ENCODE measurements at regions of chr16 and their contacts with region 1.

Region 1: GRCh38 chr16:15925631-15926030 is 23.8 kb upstream of the ABCC1 start:
- DNase-seq: no peak
- H3K4me3 ChIP-seq: no peak overlapping the region
- H3K27ac ChIP-seq: no peak overlapping the region
- H3K4me1 ChIP-seq: no peaks in the 10 kb centered on the region
- H3K27me3 ChIP-seq: no peaks in the 10 kb centered on the region
- CTCF ChIP-seq: no peak

Region 2: DNA sequence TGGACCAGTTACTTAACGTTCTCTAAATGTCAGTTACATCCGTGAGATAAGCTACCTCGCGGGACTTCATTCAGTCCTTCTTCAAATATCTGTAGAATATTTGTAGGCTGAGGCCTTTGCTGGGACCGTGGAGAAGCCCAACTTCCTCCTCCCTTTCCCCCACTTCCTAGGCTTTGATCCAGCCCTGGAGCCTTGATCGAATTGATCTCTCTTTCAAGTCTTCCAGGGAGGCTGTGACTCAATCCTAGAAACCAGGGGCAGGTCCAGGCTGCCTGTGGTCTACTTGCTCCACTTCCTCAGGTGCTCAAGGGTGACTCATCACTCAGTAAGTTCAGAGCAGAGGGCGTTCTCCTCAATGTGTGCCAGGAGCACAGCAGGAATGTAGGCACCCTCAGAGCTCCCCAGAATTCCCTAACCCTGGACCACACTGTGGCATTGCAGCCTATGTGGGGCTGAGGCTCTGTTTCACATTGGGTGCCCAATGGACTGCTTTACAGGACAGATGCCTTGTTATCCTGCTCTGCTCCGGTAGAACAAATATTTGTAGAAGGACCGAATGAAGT is 26.0 kb before region 1 on chr16:
- CTCF ChIA-PET with region 1: no interaction called
- dilution Hi-C with region 1: no loop called
- in situ Hi-C with region 1: no loop called
- intact Hi-C with region 1: loop called (anchors 1 kb)
- DNase-seq: peak; percentile 98
- H3K4me3 ChIP-seq: no peak overlapping the region
- H3K27ac ChIP-seq: peak overlapping the region; percentile 98
- H3K4me1 ChIP-seq: peaks cover 30% of the 10 kb centered on the region
- H3K27me3 ChIP-seq: no peaks in the 10 kb centered on the region
- CTCF ChIP-seq: no peak